AG04449 (cell line): ENCODE measurements at regions of chr22 and their contacts with region 1.

Region 1: GRCh38 chr22:24503137-24503842 is 8.2 kb downstream of the UPB1 start:
- DNase-seq: no peak
- H3K4me3 ChIP-seq: no peak overlapping the region
- CTCF ChIP-seq: peak; percentile 75

Region 2: DNA sequence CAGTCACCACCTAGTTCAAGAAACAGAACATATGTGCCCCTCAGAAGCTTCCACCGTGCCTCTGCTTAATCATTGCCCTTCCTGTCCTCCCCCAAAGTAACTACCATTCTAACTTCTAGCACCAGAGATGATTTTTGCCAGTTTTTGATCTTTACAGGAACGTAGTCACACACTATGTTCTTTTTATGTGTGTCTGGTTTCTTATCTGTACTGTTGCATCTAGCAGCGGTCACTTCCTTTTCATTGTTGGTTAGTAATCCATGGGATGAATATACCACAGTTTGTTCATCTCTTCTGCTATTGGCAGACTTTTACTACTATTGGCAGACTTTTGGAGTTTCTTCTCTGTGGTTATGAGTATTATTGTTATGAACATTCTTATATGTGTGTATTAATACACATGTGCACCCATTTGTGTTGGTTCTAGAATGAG is 198.0 kb before region 1 on chr22:
- CTCF ChIA-PET with region 1: no interaction called
- POLR2A ChIA-PET with region 1: no interaction called
- DNase-seq: no peak
- H3K4me3 ChIP-seq: no peak overlapping the region
- CTCF ChIP-seq: no peak

Region 3: DNA sequence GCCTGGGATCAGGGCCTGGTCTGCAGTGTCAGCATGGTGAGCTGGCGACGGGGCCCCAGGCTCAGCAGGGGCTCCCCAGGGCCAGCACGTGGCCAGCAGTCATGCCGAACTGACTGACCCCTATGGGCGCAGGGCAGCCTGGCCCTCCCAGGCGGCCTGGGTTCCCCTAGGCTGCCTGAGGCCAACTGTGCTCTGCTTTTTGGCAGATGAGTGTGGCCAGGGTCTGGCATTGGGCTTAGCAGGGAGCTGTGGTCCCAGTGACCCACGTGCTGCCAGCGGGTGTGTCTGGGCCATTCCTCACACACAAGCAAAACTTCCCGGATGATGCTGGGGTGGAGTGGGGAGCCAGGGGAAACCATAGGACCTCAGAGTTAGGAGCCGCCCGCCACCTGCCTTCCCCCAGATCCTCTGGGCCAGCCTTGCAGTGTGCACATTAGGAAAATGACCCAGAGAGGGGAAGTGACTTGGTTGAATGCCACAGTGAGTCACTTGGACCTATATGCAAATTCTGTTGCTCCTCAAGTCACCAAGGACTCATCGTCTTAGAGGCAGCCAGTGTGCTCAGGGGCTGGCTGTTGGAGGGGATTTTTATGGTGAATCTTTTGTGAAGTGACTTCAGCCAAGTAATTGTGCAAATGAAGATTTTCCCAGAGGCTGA is 69.3 kb before region 1 on chr22:
- CTCF ChIA-PET with region 1: interaction called, 10 read pairs
- POLR2A ChIA-PET with region 1: no interaction called
- DNase-seq: no peak
- H3K4me3 ChIP-seq: no peak overlapping the region
- CTCF ChIP-seq: no peak

Region 4: DNA sequence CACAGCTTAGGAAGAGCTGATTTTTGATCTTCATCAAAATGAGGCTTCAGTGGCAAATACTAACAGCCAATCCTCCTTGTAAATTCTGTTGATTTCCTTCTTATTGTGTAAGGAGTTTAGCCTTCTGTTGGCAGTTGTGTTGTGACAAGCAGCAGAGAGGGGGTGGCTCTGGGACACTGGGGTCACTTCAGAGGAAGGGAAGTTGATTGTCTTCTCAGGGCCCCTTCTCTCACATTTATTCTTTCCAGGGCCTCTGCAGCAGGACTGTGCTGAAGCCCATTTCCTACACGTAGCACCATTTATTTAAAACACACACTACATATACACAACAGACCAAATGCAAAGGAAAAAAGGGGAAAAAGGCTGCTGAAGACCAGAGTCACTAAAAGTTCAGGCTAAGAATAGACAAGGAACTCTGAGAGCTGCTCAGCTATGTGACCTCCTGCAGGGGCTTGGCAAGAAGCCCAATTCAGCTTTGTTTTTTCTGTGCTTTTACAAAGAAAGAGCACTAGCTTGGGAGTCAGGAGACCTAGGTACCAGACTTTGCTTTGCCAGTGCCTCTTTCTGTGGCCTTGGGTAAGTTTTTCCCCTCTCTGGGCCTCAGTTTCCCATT is 36.5 kb before region 1 on chr22:
- CTCF ChIA-PET with region 1: interaction called, 11 read pairs
- POLR2A ChIA-PET with region 1: no interaction called
- DNase-seq: no peak
- H3K4me3 ChIP-seq: no peak overlapping the region
- CTCF ChIP-seq: no peak